Calu3 (cell line): ENCODE measurements at regions of chr16 and their contacts with region 1.

Region 1: GRCh38 chr16:71746442-71747046 is 22.0 kb upstream of the PHLPP2 start:
- DNase-seq: peak; percentile 15
- H3K4me3 Mint-ChIP-seq: no peak overlapping the region
- H3K27ac Mint-ChIP-seq: no peak overlapping the region
- H3K4me1 Mint-ChIP-seq: no peaks in the 10 kb centered on the region
- H3K27me3 Mint-ChIP-seq: no peaks in the 10 kb centered on the region
- CTCF ChIP-seq: peak; percentile 66

Region 2: DNA sequence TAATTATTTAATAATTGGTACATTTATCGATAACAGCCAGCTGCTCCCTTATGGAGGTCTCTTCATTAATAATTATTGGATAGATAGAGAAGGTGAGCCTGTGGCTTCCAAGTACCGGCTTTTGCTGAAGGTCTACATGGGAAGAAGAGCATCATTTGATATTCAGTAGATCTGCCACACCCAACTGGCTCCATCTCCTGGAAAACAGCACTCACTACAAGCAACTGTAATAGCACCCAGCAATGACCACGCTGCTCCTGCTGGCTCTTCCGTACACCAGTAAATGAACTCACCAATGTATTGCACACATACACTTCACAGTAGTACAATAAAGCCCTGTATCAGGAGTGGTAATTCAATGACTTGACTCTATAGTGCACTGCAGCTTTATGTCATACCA is 101.1 kb before region 1 on chr16:
- CTCF ChIA-PET with region 1: no interaction called
- intact Hi-C with region 1: loop called (anchors 10 kb)
- DNase-seq: peak; percentile 36
- H3K4me3 Mint-ChIP-seq: no peak overlapping the region
- H3K27ac Mint-ChIP-seq: no peak overlapping the region
- H3K4me1 Mint-ChIP-seq: no peaks in the 10 kb centered on the region
- H3K27me3 Mint-ChIP-seq: no peaks in the 10 kb centered on the region
- CTCF ChIP-seq: peak; percentile 73

Region 3: DNA sequence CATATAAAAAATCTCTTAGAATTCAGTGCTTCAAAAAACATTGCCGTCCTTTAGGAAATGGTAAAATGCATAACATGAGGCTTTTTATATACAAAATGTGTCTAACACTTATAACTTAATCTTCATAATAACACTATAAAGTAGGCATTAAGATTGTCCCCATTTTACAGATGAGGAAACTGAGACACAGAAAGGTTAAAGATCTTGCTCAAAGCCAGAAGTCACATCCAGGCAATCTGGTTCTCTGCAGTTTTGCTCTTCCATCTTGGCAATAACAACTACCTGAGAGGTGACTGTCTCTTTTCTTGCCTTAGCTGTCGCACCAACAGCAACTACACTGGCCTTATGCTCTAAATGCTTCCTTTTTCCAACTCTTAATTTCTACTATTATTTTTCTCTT is 37.5 kb after region 1 on chr16:
- CTCF ChIA-PET with region 1: no interaction called
- intact Hi-C with region 1: no loop called
- DNase-seq: no peak
- H3K4me3 Mint-ChIP-seq: no peak overlapping the region
- H3K27ac Mint-ChIP-seq: peak overlapping the region; percentile 35
- H3K4me1 Mint-ChIP-seq: peaks cover 23% of the 10 kb centered on the region
- H3K27me3 Mint-ChIP-seq: no peaks in the 10 kb centered on the region
- CTCF ChIP-seq: no peak

Region 4: DNA sequence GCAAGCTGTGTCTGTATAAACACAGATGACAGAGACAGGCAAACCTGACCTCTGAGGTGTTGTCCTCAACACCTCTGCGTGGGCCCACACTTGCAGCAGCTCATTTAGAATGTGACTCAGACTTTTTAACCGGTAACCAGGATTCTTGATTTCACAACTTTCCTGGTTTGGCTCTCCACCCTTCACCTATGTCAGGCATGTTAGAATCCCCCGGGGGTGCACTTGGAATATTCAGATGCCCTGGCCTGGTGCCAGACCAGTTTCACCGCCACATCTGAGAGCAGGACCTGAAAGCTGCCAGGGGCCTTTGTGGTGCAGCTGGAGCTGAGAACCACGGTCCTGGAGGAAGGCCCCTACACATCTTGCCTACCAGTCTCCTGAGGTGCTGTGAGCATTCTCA is 266.8 kb after region 1 on chr16:
- CTCF ChIA-PET with region 1: no interaction called
- intact Hi-C with region 1: no loop called
- DNase-seq: no peak
- H3K4me3 Mint-ChIP-seq: no peak overlapping the region
- H3K27ac Mint-ChIP-seq: no peak overlapping the region
- H3K4me1 Mint-ChIP-seq: peaks cover 9% of the 10 kb centered on the region
- H3K27me3 Mint-ChIP-seq: no peaks in the 10 kb centered on the region
- CTCF ChIP-seq: no peak